Activated T-helper 2 cell treated with anti-CD3 and anti-CD28 coated beads, Interferon-gamma antibody, Interleukin-2, Interleukin-4, amounts not matched to agents 10 μg/mL and 5 μg/mL and 100 μg/mL, durations not matched to agents 14 hours and 24 hours and 36 hours (primary cell): ENCODE measurements at regions of chr5 and their contacts with region 1.

Region 1: DNA sequence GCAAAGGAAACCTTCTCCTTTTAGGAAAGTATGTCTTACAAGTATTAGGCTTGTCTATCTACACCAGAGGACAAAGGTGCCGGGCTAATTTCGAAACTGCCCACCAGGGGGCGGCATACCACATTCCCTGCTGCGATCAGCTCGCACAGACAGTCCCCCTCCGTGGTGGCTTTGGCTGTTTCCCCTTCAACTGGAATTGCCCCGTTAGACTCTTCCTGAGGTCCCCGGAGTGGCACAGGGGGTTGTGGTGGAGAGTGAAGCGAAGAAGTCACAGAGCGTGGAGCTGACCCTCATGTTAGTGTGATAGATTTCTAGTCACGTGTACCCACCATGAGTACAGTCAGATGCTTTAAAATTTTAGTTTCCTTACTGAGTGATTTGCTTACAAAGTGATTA is 17.5 kb downstream of the PTTG1 start:
- DNase-seq: peak; percentile 81
- H3K4me3 Mint-ChIP-seq: peak overlapping the region; percentile 81
- H3K27ac Mint-ChIP-seq: peak overlapping the region; percentile 99
- H3K4me1 Mint-ChIP-seq: peaks cover 58% of the 10 kb centered on the region
- H3K27me3 Mint-ChIP-seq: no peaks in the 10 kb centered on the region

Region 2: GRCh38 chr5:160390787-160391696 is 48.2 kb before region 1 on chr5:
- intact Hi-C with region 1: no loop called
- DNase-seq: no peak
- H3K4me3 Mint-ChIP-seq: no peak overlapping the region
- H3K27ac Mint-ChIP-seq: no peak overlapping the region
- H3K4me1 Mint-ChIP-seq: no peaks in the 10 kb centered on the region
- H3K27me3 Mint-ChIP-seq: peaks cover 2% of the 10 kb centered on the region

Region 3: DNA sequence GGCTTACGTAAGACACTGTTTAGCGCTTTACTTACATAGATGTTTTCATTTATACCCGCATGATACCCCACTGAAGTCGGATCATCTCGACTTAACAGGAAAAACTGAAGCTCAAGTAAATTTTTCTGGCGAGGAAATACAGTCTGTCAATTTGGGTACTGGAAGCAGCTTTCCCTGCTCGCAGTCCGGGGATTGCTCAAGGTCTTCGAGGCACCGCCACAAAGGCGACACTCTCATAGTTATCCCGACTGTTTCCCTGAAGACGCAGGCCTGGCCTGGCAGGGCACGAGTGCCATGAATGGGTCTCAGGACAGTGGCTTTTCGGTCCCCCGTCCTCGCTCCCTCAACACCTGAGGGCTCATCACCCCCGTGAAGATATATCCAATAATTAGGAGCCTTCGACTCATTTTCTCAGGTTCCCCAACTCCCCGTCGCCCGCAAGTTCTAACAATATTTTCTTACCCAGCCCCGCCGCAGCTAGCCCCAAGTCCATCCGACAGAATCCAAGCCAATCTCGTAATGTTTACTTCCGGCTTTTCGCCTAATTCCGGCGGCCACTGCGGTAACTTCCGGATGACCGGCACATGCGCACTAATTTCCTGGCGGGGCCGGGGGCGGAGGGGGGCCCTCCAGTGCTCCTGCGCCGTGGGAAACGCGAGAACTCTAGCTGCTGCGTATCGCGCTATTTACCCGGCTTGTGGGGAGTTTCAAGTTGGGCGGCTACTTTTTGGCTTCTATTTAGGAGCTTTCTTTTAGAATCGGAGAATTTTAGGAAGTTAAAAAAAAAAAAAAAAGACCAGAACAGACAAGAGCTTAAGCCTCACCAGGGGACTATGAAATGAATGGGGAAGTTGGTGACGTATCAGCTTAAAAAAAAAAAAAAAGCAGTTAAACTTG is 20.4 kb before region 1 on chr5 and contains the start of gene SLU7:
- intact Hi-C with region 1: loop called (anchors 1 kb)
- DNase-seq: peak; percentile 91
- H3K4me3 Mint-ChIP-seq: peak within 1 kb of the TSS; percentile 96
- H3K27ac Mint-ChIP-seq: peak within 1 kb of the TSS; percentile 93
- H3K4me1 Mint-ChIP-seq: peaks cover 56% of the 10 kb centered on the region
- H3K27me3 Mint-ChIP-seq: no peaks in the 10 kb centered on the region
- total RNA-seq, gene SLU7: 41.3 and 44.3 TPM in 2 replicates

Region 4: DNA sequence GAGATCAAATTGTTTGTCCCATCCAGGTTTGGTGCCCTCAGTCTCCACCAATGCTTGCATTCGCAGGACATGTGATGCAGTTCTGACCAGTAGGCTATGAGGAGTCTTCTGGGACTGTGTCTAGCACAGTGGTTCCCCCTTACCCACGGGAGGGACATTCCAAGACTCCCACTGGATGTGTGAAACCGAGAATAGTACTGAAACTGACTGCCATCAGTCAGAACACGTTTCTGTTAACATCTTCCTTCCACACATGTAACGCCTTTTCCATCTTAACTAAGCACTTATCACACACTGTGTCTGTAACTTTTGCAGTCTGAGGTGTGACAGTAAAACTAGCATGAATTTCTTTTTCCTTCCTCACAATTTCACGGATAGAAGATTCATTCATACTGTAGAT is 57.1 kb after region 1 on chr5:
- intact Hi-C with region 1: loop called (anchors 1 kb)
- DNase-seq: no peak
- H3K4me3 Mint-ChIP-seq: no peak overlapping the region
- H3K27ac Mint-ChIP-seq: peak overlapping the region; percentile 75
- H3K4me1 Mint-ChIP-seq: peaks cover 42% of the 10 kb centered on the region
- H3K27me3 Mint-ChIP-seq: no peaks in the 10 kb centered on the region

Region 5: DNA sequence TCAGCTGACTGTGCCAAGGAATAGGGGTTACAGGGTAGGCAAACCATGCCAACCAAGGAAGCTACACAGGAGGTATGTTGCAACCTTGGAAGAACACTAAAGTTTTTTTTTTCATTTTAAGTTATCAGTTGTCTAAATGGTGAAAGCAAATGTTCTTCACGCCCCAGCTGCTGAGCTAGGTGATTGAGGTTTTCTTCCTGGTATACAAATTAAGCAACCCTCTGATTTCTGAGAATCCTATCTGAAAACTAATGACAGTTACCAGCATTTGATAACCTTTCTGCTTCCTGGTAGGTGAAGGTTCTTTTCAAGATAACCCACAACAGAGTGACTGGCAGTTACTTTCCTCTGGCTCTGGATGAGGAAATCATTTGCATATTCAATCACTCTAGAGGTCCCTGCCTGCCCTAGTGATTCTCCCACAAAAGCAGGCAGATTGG is 217.9 kb after region 1 on chr5:
- intact Hi-C with region 1: loop called (anchors 5 kb)
- DNase-seq: no peak
- H3K4me3 Mint-ChIP-seq: no peak overlapping the region
- H3K27ac Mint-ChIP-seq: peak overlapping the region; percentile 24
- H3K4me1 Mint-ChIP-seq: peaks cover 21% of the 10 kb centered on the region
- H3K27me3 Mint-ChIP-seq: no peaks in the 10 kb centered on the region

Region 6: GRCh38 chr5:160843240-160843639 is 404.0 kb after region 1 on chr5:
- intact Hi-C with region 1: loop called (anchors 10 kb)
- DNase-seq: no peak
- H3K4me3 Mint-ChIP-seq: no peak overlapping the region
- H3K27ac Mint-ChIP-seq: no peak overlapping the region
- H3K4me1 Mint-ChIP-seq: no peaks in the 10 kb centered on the region
- H3K27me3 Mint-ChIP-seq: no peaks in the 10 kb centered on the region